H1 (cell line): ENCODE measurements at regions of chr1 and their contacts with region 1.

Region 1: GRCh38 chr1:65049941-65050713 is 83.8 kb upstream of the JAK1 start:
- DNase-seq: no peak
- H3K4me3 ChIP-seq: no peak overlapping the region
- H3K27ac ChIP-seq: no peak overlapping the region
- H3K4me1 ChIP-seq: no peaks in the 10 kb centered on the region
- H3K27me3 ChIP-seq: no peaks in the 10 kb centered on the region; a peak in 1 of 7 replicates
- CTCF ChIP-seq: no peak
- EP300 ChIP-seq: no peak
- POLR2A ChIP-seq: no peak
- RAD21 ChIP-seq: no peak

Region 2: DNA sequence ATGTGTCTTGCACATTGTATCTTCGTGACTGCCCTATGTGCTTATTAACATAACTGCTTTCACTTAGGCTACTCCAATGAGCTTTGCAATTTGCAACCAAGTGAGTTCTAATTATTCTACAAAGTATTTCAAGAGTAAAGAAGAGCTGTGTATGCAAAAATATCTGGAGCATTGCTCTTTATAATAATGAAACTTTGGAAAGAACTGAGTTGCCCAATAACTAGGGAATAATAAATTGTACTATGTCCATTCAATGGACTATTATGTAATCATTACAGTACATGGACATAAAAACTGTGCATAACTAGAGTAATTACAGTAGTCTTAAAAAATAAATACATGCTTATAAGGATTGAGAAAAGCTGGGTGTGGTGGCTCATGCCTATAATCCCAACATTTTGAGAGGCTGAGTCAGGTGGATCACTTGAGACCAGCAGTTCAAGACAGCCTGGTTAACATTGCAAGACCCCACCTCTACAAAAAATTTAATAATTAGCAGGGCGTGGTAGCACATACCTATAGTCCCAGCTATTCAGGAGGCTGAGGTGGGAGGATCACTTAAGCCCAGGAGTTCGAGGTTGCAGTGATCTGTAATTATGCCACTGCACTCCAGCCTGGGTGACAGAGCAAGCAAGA is 13.5 kb before region 1 on chr1:
- CTCF ChIA-PET with region 1: interaction called, 5 read pairs
- POLR2A ChIA-PET with region 1: interaction called, 17 read pairs
- DNase-seq: no peak
- H3K4me3 ChIP-seq: no peak overlapping the region
- H3K27ac ChIP-seq: no peak overlapping the region
- H3K4me1 ChIP-seq: no peaks in the 10 kb centered on the region
- H3K27me3 ChIP-seq: no peaks in the 10 kb centered on the region
- CTCF ChIP-seq: no peak
- EP300 ChIP-seq: no peak
- POLR2A ChIP-seq: no peak
- RAD21 ChIP-seq: no peak